ENCODE measurements at regions of chr16 and their contacts with region 1.

Region 1: GRCh38 chr16:84308120-84308519 is 13.4 kb downstream of the WFDC1 start:
- DNase-seq: peak; percentile 83
- H3K4me3 ChIP-seq: no peak overlapping the region
- H3K27ac ChIP-seq: no peak overlapping the region
- H3K4me1 ChIP-seq: no peaks in the 10 kb centered on the region
- H3K27me3 ChIP-seq: peaks cover 18% of the 10 kb centered on the region; the same call in 1 of the 2 replicates
- CTCF ChIP-seq: peak; percentile 53
- EP300 ChIP-seq: no peak
- RAD21 ChIP-seq: peak; percentile 80

Region 2: DNA sequence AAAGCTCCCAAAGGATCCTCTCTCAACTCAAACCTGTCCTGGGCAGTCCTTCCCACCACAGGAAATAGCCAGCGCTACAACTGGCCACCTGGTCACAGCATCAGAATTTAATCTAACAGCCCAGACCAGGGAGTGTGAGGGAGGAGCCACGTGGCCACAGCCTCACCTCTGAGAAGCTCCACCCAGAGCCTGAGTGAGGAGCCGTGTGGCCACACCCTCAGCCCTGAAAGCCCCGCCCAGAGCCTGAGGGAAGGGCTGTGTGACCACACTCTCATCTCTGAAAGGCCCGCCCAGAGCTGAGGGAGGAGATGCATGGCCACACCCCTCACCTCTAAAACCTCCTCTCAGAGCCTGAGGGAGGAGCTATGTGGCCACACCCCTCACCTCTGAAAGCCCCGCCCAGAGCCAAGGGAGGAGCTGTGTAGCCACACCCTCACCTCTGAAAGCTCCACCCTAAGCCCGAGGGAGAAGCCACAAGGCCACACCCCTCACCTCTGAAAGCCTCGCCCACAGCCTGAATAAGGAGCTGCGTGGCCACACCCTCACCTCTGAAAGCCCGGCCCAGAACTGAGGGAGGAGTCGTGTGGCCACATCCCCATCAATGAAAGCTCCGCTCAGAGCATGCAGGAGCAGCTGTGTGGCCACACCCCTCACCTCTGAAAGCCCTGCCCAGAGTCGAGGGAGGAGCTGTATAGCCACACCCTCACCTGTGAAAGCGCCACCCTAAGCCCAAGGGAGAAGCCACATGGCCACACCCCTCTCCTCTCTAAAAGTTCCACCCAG is 294.1 kb before region 1 on chr16:
- CTCF ChIA-PET with region 1: no interaction called
- POLR2A ChIA-PET with region 1: no interaction called
- DNase-seq: peak; percentile 72
- H3K4me3 ChIP-seq: no peak overlapping the region
- H3K27ac ChIP-seq: no peak overlapping the region
- H3K4me1 ChIP-seq: no peaks in the 10 kb centered on the region
- H3K27me3 ChIP-seq: no peaks in the 10 kb centered on the region; the same call in 1 of the 2 replicates
- CTCF ChIP-seq: no peak
- EP300 ChIP-seq: no peak
- RAD21 ChIP-seq: no peak

Region 3: DNA sequence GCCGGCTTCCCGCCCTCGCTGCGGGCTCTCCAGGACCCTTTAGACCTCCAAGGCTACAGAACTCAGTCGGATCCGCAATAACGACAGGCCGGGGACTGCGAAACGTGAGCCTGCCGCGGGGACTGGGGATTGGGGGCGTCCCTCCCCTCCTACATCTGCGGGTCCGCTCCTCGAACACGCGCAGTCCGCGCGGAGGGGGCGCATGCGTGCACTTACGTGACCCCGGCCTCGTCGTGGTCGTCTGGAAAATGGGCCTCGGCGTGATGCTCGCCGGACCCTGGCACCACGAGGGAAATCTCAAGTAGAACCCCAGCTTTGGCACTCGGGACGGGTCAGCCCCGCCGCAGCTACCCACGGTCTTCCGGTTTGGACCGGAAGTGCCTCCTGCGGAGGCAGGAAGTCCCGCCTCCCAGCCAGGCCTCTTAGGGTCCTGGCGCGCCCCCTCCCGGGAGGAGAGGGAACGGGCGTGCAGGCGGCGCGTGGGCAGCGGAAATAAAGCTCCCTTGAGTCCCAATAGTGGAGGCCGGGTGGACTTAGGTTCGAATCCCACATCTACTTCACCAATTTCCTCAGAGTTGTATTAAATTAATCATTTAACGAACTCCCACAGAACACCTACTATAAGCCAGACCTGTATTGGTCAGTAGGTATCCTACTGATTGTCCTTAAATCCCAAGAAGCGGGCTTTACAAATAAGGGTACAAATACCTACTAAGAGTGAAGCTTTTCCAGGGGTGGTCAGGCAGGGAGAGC is 121.3 kb before region 1 on chr16 and contains the start of gene TAF1C:
- CTCF ChIA-PET with region 1: interaction called, 24 read pairs
- POLR2A ChIA-PET with region 1: no interaction called
- DNase-seq: peak; percentile 99
- H3K4me3 ChIP-seq: peak within 1 kb of the TSS; percentile 96 to 100
- H3K27ac ChIP-seq: peak within 1 kb of the TSS; percentile 51 to 64; a peak in 3 of 4 replicates
- H3K4me1 ChIP-seq: peaks cover 0 to 11% of the 10 kb centered on the region in 2 experiments; a peak in 1 of 4 replicates
- H3K27me3 ChIP-seq: no peaks in the 10 kb centered on the region
- CTCF ChIP-seq: peak; percentile 91
- EP300 ChIP-seq: no peak; a peak in 1 of 4 replicates
- RAD21 ChIP-seq: peak; percentile 67
- polyA plus RNA-seq, gene TAF1C: 49.3 and 56.1 TPM in 2 replicates

Region 4: DNA sequence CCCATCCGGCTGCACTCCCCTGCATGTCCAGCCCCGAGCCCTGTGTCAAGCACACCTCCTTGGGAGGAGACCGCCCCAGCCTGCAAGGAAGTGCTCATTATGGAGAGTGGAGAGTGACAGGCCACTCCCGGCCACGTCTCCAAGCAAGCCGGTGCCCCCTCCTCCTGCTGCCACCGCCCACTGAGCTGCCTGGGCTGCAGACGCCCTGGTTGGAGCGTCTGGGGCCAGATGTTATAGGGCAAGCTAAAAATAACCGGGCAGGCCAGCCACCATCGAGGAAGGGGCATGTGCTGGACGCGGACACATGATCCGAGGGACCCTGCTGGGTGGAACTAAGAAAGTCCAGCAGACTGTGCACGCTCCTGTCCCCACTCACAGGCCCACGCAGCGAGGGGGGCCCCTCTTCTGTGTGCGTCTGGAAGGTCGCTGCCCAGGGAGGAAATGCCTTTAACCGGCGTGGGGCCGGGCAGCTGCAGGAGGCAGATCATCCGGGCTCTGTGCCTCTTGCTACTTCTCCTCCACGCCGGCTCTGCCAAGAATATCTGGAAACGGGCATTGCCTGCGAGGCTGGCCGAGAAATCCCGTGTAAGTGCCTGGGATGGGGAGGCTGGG is 13.5 kb before region 1 on chr16 and contains the start of gene WFDC1:
- CTCF ChIA-PET with region 1: interaction called, 11 read pairs
- POLR2A ChIA-PET with region 1: no interaction called
- DNase-seq: peak; percentile 68
- H3K4me3 ChIP-seq: peak within 1 kb of the TSS; percentile 8 to 32; a peak in 1 of 4 replicates
- H3K27ac ChIP-seq: no peak within 1 kb of the TSS
- H3K4me1 ChIP-seq: peaks cover 6 to 12% of the 10 kb centered on the region in 2 experiments; a peak in 2 of 4 replicates
- H3K27me3 ChIP-seq: peaks cover 6% of the 10 kb centered on the region
- CTCF ChIP-seq: no peak
- EP300 ChIP-seq: no peak
- RAD21 ChIP-seq: no peak
- polyA plus RNA-seq, gene WFDC1: 0.03 and 0.23 TPM in 2 replicates

Region 5: GRCh38 chr16:84321932-84322331 is 13.8 kb after region 1 on chr16:
- CTCF ChIA-PET with region 1: interaction called, 10 read pairs
- POLR2A ChIA-PET with region 1: no interaction called
- DNase-seq: no peak
- H3K4me3 ChIP-seq: no peak overlapping the region
- H3K27ac ChIP-seq: no peak overlapping the region
- H3K4me1 ChIP-seq: no peaks in the 10 kb centered on the region
- H3K27me3 ChIP-seq: peaks cover 50% of the 10 kb centered on the region
- CTCF ChIP-seq: no peak
- EP300 ChIP-seq: no peak
- RAD21 ChIP-seq: no peak

Region 6: GRCh38 chr16:84329843-84330684 is 21.9 kb after region 1 on chr16:
- CTCF ChIA-PET with region 1: interaction called, 11 read pairs
- POLR2A ChIA-PET with region 1: no interaction called
- DNase-seq: no peak
- H3K4me3 ChIP-seq: no peak overlapping the region
- H3K27ac ChIP-seq: no peak overlapping the region
- H3K4me1 ChIP-seq: no peaks in the 10 kb centered on the region
- H3K27me3 ChIP-seq: peaks cover 14% of the 10 kb centered on the region; the same call in 1 of the 2 replicates
- CTCF ChIP-seq: no peak
- EP300 ChIP-seq: no peak
- RAD21 ChIP-seq: no peak

Region 7: DNA sequence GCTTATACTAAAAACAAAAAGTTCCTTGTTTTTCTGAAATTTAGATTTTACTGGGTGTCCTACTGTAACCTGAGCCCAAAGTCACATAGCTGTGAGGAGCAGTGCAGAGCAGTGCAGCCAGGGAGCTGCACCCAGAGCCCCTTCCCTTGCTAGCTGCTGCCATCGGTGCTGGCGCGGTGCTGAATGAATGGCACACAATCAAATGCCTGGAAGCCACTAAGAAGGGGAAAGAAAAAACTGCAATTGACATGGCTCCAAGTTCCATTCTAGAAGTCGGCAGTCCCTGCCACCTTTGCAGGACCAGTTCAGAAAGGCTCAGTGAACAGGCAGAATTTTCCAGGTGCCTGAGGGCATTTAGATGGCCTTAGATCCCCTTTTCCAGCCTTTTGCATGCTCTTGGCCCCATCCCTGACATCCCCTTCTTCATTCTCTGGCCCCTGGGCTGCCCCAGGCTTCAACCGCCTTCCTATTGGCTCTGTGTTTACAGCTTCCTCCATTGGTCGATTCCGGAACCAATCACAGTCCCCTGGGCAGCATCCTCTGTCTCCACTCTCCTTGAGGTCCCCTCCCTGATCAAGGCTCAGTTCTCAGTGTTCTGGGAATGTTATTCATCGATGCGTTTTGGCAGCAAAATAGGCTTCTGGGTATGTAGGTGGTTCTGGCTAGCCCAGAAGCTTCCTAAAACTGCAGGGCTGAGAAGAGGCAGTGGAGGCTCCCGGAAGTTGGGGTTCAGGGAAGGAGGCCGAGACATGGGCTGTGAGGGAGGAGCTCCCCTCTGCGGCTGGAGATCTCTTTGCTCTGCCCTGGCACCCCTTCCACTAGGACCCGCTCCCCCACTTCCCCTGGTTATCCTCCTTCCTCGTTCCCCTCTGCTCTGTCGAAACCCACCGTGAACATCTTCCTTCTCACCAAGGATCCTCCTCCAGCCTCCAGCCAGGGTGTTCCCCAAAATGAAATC is 98.2 kb after region 1 on chr16:
- CTCF ChIA-PET with region 1: no interaction called
- POLR2A ChIA-PET with region 1: no interaction called
- DNase-seq: peak; percentile 78
- H3K4me3 ChIP-seq: peak overlapping the region; percentile 8 to 23; a peak in 3 of 4 replicates
- H3K27ac ChIP-seq: no peak overlapping the region
- H3K4me1 ChIP-seq: peaks cover 0 to 5% of the 10 kb centered on the region in 2 experiments; a peak in 1 of 4 replicates
- H3K27me3 ChIP-seq: peaks cover 13% of the 10 kb centered on the region; the same call in 1 of the 2 replicates
- CTCF ChIP-seq: no peak
- EP300 ChIP-seq: no peak
- RAD21 ChIP-seq: no peak

Measured in SK-N-SH (cell line).